Dendritic cell treated with granulocyte-macrophage colony-stimulating factor and Interleukin-4, amounts not matched to agents 40 ng/mL and 50 ng/mL, for 4 days (primary cell): ENCODE measurements at regions of chr15 and their contacts with region 1.

Region 1: GRCh38 chr15:47987908-47988532 is 132.8 kb upstream of the SLC24A5 start:
- H3K4me3 Mint-ChIP-seq: no peak overlapping the region
- H3K27ac Mint-ChIP-seq: no peak overlapping the region
- H3K4me1 Mint-ChIP-seq: peaks cover 10% of the 10 kb centered on the region
- H3K27me3 Mint-ChIP-seq: peaks cover 2% of the 10 kb centered on the region

Region 2: DNA sequence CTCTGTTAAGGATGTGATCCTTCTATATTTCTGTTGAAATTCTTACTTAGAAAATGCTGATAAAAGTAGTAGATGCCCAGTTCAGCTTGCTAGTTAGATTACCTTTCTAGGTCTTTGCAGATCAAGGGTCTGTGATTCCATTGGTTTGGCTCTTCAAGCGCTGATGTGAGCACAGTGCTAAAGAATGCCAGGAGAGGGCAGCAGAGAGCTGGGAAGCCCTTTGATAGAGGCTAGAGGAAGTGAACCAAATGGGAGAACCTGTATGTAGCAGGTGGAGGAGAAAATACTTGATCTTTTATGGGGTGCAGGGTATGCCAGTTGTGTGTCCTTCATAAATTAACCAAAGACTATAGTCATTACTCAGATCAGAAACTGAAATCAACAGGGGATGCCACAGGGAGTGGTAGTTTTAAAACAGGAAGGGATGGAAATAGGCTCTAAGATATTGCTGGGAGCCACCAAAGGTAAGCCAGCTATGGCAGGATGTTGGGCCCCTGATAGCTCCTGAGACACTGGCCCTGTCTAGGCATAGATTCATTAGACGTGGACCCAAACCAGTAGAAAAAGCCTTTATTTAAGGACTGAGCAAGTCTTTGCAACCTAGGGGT is 1675.8 kb before region 1 on chr15:
- intact Hi-C with region 1: loop called (anchors 10 kb)
- H3K4me3 Mint-ChIP-seq: no peak overlapping the region
- H3K27ac Mint-ChIP-seq: no peak overlapping the region
- H3K4me1 Mint-ChIP-seq: no peaks in the 10 kb centered on the region
- H3K27me3 Mint-ChIP-seq: no peaks in the 10 kb centered on the region

Region 3: DNA sequence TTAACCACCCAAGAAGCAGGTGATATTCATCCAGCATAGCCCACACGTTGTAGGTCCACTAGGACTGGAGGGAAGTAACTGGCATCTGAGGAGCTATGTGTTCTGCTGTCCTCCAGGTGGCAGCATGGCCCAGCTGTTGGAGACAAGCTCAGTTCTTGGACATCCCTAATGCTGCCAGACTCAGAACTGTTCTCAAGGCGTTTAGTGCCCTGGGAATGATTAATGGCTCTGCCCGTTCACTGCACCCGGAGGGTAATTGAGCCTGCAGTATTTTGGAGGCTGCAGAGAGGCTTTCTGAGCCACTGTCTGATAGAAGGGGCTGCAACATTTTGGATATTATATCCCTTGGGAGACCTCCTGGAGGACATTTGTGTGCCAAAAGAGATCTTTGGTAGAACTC is 792.0 kb before region 1 on chr15:
- intact Hi-C with region 1: loop called (anchors 1 kb)
- H3K4me3 Mint-ChIP-seq: no peak overlapping the region
- H3K27ac Mint-ChIP-seq: no peak overlapping the region
- H3K4me1 Mint-ChIP-seq: no peaks in the 10 kb centered on the region
- H3K27me3 Mint-ChIP-seq: peaks cover 2% of the 10 kb centered on the region

Region 4: GRCh38 chr15:47473832-47474231 is 514.2 kb before region 1 on chr15:
- intact Hi-C with region 1: loop called (anchors 1 kb)
- H3K4me3 Mint-ChIP-seq: no peak overlapping the region
- H3K27ac Mint-ChIP-seq: no peak overlapping the region
- H3K4me1 Mint-ChIP-seq: no peaks in the 10 kb centered on the region
- H3K27me3 Mint-ChIP-seq: peaks cover 6% of the 10 kb centered on the region

Region 5: GRCh38 chr15:47717036-47717611 is 270.9 kb before region 1 on chr15 and contains the start of gene SEMA6D:
- intact Hi-C with region 1: loop called (anchors 10 kb)
- H3K4me3 Mint-ChIP-seq: no peak within 1 kb of the TSS
- H3K27ac Mint-ChIP-seq: no peak within 1 kb of the TSS
- H3K4me1 Mint-ChIP-seq: peaks cover 10% of the 10 kb centered on the region
- H3K27me3 Mint-ChIP-seq: peaks cover 65% of the 10 kb centered on the region